Aorta (tissue), 5 donors: ENCODE measurements at regions of chr9 and their contacts with region 1.

Region 1: DNA sequence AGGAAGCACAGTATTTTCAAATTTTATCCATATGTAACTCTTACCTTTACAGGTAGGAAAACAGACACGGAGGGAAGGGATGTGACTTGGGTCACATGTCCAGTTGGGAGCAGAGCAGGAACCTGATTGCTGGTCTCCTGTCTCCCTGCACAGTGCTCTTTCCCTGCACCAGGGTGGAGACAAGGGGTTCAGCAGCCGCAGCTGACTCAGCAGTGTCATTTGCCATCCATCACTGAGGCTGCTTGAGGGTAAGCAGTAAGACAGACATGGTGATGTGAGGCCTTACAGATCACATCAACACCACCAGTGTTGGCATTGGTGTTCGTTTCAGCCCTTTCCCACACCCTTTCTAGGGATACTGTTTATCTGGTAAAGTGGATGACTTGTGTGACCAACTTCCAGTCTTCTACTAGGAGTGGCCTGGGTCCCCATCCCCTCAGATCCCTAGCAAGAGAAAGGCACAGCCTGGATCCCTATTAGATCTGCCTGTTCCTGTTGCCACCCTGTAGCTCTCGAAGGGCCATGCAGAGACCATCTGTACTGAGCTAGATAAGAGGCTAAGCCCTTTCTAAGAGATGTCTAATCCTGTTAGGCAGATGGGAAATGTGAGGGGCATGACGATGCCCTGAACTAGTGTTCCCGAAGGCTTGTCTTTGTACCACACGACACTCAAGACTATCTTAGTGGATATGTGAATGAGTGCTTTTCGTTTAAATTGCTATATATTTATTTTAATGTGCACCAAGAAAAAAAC is 29.1 kb downstream of the FRMPD1 start:
- DNase-seq: no peak
- ATAC-seq: no peak
- H3K4me3 ChIP-seq: no peak overlapping the region
- H3K27ac ChIP-seq: no peak overlapping the region
- H3K4me1 ChIP-seq: no peaks in the 10 kb centered on the region
- H3K27me3 ChIP-seq: no peaks in the 10 kb centered on the region

Region 2: GRCh38 chr9:37639109-37639762 is 40.6 kb before region 1 on chr9:
- intact Hi-C with region 1: loop called in 1 of 2 experiments (anchors 10 kb)
- DNase-seq: no peak
- ATAC-seq: no peak
- H3K4me3 ChIP-seq: no peak overlapping the region
- H3K27ac ChIP-seq: no peak overlapping the region
- H3K4me1 ChIP-seq: no peaks in the 10 kb centered on the region
- H3K27me3 ChIP-seq: peaks cover 0 to 2% of the 10 kb centered on the region in 2 donors